Calu3 (cell line): ENCODE measurements at regions of chr19 and their contacts with region 1.

Region 1: DNA sequence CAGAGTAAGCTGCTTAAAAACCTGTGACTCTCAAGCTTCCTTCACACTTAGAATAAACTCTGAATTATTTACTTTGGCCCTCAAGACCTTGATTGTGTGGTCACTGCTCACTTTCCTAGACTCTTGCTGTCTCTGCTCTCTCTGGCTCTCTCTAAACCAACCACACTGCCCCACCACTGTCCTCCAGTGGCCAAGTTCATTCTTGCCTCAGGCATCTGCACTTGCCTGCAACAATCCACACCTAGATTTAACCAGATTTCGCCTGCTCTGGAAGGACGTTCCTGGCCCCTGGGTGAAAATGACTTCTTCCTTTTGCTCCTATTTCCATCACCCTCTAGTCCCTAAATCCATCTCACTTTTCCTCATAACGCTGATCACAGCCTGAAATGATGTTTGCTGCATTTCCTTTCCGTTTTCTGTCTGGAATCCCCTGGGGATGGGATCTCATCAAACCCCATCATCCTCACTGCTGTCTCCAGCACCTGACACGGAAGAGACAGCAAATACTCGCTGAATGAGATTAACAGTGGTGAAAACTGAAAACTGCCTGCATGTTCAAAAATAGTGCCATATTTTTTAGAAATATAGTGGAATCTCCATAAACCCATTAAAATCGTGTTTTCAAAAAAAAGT is 232.6 kb downstream of the UQCRFS1 start:
- DNase-seq: peak; percentile 67
- H3K4me3 Mint-ChIP-seq: peak overlapping the region; percentile 45
- H3K27ac Mint-ChIP-seq: peak overlapping the region; percentile 51
- H3K4me1 Mint-ChIP-seq: peaks cover 27% of the 10 kb centered on the region
- H3K27me3 Mint-ChIP-seq: no peaks in the 10 kb centered on the region
- CTCF ChIP-seq: peak; percentile 45

Region 2: DNA sequence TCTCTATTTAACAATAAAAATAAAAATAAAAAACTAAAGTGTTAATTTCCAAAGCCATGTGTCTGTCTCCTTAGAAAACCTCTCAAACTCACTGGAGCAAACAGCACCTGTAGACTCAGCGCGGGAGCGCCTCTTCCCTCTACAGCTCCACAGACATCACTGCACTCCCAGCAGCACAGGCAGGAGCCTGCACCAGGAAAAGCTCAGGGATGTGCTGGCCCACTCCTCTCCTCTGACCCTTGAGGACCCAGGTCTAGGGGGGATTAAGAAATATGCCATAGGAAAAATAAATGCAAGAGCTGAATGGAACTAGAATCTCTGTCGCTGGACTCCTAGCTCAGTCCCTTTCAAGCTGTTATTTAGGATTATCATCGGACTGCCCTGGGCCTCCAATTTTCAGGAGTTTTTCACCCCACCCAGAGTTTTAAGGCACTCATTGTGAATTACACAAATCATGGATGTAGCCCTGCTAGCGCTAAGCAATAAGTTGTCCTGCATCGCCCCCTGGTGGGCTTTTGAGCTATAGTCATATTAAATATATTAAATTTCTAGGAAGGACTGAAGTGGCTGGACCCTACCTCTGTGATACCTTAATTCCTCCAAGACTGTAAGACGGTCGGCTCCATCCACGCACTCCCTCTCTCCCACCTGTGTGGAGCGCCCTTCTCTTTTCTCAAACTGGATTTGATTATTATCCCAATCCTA is 101.3 kb before region 1 on chr19:
- CTCF ChIA-PET with region 1: no interaction called
- intact Hi-C with region 1: loop called (anchors 5 kb)
- DNase-seq: peak; percentile 74
- H3K4me3 Mint-ChIP-seq: no peak overlapping the region
- H3K27ac Mint-ChIP-seq: no peak overlapping the region
- H3K4me1 Mint-ChIP-seq: peaks cover 10% of the 10 kb centered on the region
- H3K27me3 Mint-ChIP-seq: no peaks in the 10 kb centered on the region
- CTCF ChIP-seq: peak; percentile 74

Region 3: DNA sequence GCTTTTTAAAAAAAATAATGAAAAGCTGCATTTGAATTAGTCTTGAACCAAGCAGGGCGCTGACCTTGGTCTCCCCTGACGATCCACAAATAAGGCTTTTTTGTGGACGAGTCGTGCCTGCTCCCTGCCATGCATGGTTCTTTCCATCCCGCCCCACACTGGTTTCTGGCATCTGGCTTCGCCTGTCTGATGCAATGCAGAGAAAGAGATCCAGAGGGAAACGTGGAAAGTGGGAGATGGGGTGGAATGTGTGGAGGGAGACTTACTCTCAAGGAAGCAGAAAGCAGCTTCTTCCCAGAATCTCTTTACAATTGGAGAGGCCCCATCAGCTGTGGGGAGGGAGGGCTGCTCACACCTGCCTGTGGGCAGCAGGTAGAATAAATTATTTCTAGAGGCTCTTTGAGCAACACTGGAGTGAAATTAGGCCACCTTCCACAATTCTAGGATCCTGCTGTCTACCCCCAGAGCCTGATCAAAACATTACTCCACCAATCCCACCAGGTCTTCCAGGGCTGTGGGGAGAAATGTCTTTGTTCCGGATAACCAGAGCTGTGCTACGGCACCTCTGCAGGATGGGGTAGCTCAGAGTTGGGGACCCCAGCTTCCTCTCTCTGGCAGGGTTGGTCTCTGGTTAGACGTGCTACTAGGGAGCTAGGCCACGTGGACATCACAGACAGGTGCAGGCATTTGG is 49.1 kb after region 1 on chr19:
- CTCF ChIA-PET with region 1: no interaction called
- intact Hi-C with region 1: no loop called
- DNase-seq: no peak
- H3K4me3 Mint-ChIP-seq: no peak overlapping the region
- H3K27ac Mint-ChIP-seq: no peak overlapping the region
- H3K4me1 Mint-ChIP-seq: no peaks in the 10 kb centered on the region
- H3K27me3 Mint-ChIP-seq: no peaks in the 10 kb centered on the region
- CTCF ChIP-seq: no peak

Region 4: GRCh38 chr19:29263305-29264135 is 283.2 kb after region 1 on chr19:
- CTCF ChIA-PET with region 1: no interaction called
- intact Hi-C with region 1: loop called (anchors 5 kb)
- DNase-seq: peak; percentile 73
- H3K4me3 Mint-ChIP-seq: no peak overlapping the region
- H3K27ac Mint-ChIP-seq: no peak overlapping the region
- H3K4me1 Mint-ChIP-seq: peaks cover 6% of the 10 kb centered on the region
- H3K27me3 Mint-ChIP-seq: peaks cover 47% of the 10 kb centered on the region
- CTCF ChIP-seq: peak; percentile 79